Posterior vena cava (tissue), 2 donors: ENCODE measurements at regions of chr17 and their contacts with region 1.

Region 1: DNA sequence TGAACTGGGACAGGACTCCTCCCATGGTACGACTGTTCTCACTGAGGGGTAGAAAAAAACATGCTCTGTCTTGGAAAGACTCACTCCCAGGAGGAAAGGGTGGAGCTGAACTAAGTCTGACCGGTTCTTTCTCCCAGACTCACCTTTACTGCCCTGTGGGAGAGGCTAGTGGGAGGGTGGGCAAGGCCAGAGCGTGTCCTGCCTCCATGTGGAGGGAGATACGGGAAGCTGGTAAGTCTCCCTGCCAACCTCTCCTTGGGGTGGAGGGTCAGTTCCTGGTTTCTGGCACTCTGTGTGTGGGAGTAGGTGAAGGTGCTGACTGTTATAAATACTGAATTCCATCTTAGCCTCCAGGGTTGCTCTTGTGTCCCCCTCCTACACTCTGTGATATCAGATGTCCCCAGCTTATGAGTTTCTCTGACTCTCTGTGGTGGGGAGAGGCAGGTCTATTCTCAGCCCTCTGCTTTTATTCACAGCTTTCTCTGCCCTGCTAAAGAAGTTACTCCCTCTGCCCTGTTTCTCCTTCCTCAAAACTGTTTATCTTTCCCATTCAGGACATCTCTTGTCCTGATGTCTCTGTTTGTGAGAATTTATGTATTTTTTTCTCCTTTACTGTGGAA is 26.9 kb upstream of the FAM20A start:
- DNase-seq: no peak

Region 2: DNA sequence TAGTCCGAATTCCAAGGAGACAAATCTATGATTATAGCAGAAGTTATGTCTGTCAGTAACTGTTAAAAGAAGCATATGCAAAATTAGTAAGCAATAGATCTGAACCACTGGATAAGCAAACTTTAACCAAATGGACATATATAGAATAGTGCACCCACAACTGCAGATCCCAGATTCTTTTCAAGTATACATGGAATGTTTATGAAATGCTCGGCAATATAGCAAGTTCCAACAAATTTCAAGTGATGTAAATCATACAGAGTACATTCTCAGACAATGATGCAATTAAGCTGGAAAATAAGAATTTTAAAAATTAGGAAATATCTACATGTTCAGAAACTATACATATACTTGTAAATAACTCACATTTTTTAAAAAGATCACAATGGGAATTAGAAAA is 1374.7 kb before region 1 on chr17:
- intact Hi-C with region 1: loop called in 1 of 2 experiments (anchors 5 kb)
- DNase-seq: no peak